ENCODE measurements at regions of chr3 and their contacts with region 1.

Region 1: GRCh38 chr3:156674046-156674910 is at the start of gene TIPARP:
- DNase-seq: peak; percentile 100
- H3K4me3 Mint-ChIP-seq: peak within 1 kb of the TSS; percentile 86
- H3K27ac Mint-ChIP-seq: peak within 1 kb of the TSS; percentile 89
- H3K4me1 Mint-ChIP-seq: peaks cover 40% of the 10 kb centered on the region
- H3K27me3 Mint-ChIP-seq: no peaks in the 10 kb centered on the region
- total RNA-seq, gene TIPARP: 22.1 and 22.8 TPM in 2 replicates

Region 2: DNA sequence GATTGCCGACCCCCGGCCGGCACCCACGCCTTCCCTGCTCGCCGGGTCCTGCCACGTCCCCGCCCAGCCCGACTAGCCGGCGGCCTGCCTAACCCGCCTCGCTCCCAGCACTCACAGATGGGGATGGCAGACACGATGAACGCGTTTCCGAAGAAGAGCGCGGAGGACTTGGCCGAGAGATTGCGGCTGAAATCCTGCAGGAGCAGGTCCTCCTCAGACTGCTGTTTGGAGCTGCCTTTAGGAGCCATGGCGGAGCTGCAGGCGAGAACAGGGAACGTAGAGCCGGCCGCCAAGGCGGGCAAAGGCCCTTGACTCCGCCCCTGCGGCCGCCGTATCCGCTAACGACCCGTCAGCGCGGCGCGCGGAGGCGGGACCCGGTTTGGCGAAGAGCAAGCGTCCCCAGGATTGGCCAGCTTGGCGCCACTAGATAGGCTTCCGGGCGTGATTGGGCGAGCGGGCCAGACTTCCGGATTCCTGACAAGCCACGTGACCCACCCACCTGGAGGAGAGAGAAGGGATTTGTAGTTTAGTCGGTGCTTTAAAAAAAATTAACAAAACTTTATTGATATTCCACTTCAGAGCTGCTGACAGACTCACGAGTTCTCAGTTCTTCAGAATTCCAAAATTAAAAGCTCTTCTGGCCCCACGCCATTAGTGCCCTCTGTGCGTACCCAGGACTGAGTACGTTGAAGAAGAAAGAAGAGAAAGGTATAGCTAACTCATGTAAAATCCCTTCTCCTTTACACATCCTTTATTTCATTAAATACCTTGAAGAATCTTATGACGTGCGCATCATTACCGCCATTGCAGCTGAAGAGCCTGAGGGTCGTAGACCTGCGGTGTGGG is 119.2 kb before region 1 on chr3 and contains the start of gene SSR3:
- intact Hi-C with region 1: loop called (anchors 1 kb)
- DNase-seq: peak; percentile 98
- H3K4me3 Mint-ChIP-seq: peak within 1 kb of the TSS; percentile 96
- H3K27ac Mint-ChIP-seq: peak within 1 kb of the TSS; percentile 92
- H3K4me1 Mint-ChIP-seq: peaks cover 47% of the 10 kb centered on the region
- H3K27me3 Mint-ChIP-seq: no peaks in the 10 kb centered on the region
- total RNA-seq, gene SSR3: 193 and 197 TPM in 2 replicates

Region 3: GRCh38 chr3:156685198-156685597 is 10.9 kb after region 1 on chr3:
- intact Hi-C with region 1: loop called (anchors 1 kb)
- DNase-seq: no peak
- H3K4me3 Mint-ChIP-seq: peak overlapping the region; percentile 48
- H3K27ac Mint-ChIP-seq: peak overlapping the region; percentile 54
- H3K4me1 Mint-ChIP-seq: peaks cover 76% of the 10 kb centered on the region
- H3K27me3 Mint-ChIP-seq: no peaks in the 10 kb centered on the region

Region 4: DNA sequence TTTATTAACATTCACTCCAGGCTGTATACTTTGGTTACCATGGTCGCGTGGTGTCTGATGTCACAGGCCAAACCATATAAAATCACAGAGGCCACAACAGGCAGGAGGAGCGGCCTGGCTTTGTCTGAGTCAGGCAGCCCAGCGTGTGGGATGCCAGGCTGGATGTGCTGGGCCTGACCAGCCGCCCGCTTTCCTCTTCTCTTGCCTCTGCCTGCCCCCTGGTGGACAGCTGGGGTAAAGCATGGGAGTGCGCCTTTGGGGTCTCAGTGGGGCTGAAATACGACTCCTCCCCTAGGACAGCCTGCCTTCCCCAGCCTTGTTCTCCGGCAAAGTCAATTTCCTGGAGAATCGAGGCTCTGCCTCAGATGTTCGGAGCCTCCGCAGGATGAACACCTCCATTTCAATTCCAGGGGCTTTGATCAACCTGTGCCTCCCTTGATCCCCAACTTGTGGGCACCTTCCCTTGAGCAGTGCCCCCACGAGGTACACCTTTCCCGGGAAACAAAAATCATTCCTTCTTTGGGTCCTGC is 407.5 kb after region 1 on chr3:
- intact Hi-C with region 1: loop called (anchors 1 kb)
- DNase-seq: peak; percentile 73
- H3K4me3 Mint-ChIP-seq: no peak overlapping the region
- H3K27ac Mint-ChIP-seq: peak overlapping the region; percentile 47
- H3K4me1 Mint-ChIP-seq: peaks cover 47% of the 10 kb centered on the region
- H3K27me3 Mint-ChIP-seq: no peaks in the 10 kb centered on the region

Region 5: GRCh38 chr3:157136647-157137387 is 462.5 kb after region 1 on chr3:
- intact Hi-C with region 1: loop called (anchors 2 kb)
- DNase-seq: no peak
- H3K4me3 Mint-ChIP-seq: no peak overlapping the region
- H3K27ac Mint-ChIP-seq: peak overlapping the region; percentile 24
- H3K4me1 Mint-ChIP-seq: peaks cover 54% of the 10 kb centered on the region
- H3K27me3 Mint-ChIP-seq: no peaks in the 10 kb centered on the region